ENCODE measurements at regions of chrX and their contacts with region 1.

Region 1: GRCh38 chrX:11461201-11462001 is 168.2 kb downstream of the AMELX start:
- DNase-seq: peak; percentile 63 to 79
- H3K4me3 ChIP-seq: no peak overlapping the region
- H3K4me3 Mint-ChIP-seq: peak overlapping the region; percentile 41
- H3K27ac Mint-ChIP-seq: peak overlapping the region; percentile 83
- H3K4me1 ChIP-seq: peaks cover 44% of the 10 kb centered on the region
- H3K4me1 Mint-ChIP-seq: peaks cover 17% of the 10 kb centered on the region
- H3K27me3 ChIP-seq: no peaks in the 10 kb centered on the region
- H3K27me3 Mint-ChIP-seq: no peaks in the 10 kb centered on the region
- CTCF ChIP-seq: no peak

Region 2: DNA sequence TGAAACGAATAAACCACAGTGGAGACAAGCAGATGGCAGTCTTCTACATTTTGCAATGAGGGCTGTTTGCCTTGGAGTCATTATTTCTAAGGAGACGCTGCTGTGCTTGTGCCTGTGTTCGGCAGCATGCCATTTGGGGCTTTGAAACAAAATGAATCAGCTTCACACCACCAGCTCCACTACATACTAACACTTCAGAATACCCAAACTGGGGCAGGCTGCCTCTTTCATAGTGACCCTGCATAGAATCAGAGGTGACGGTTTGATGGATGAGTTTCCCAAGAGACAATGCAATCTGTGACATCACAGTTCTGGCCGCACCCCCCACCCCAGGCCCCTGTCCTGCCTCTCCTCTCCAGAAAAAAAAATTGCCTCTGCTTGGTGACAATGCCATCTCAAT is 783.9 kb before region 1 on chrX:
- CTCF ChIA-PET with region 1: no interaction called
- POLR2A ChIA-PET with region 1: no interaction called
- intact Hi-C with region 1: no loop called
- DNase-seq: no peak
- H3K4me3 ChIP-seq: no peak overlapping the region
- H3K4me3 Mint-ChIP-seq: no peak overlapping the region
- H3K27ac Mint-ChIP-seq: no peak overlapping the region
- H3K4me1 ChIP-seq: no peaks in the 10 kb centered on the region
- H3K4me1 Mint-ChIP-seq: no peaks in the 10 kb centered on the region
- H3K27me3 ChIP-seq: no peaks in the 10 kb centered on the region
- H3K27me3 Mint-ChIP-seq: no peaks in the 10 kb centered on the region
- CTCF ChIP-seq: no peak

Region 3: GRCh38 chrX:11304829-11305228 is 156.6 kb before region 1 on chrX:
- CTCF ChIA-PET with region 1: no interaction called
- POLR2A ChIA-PET with region 1: no interaction called
- intact Hi-C with region 1: no loop called
- DNase-seq: no peak
- H3K4me3 ChIP-seq: no peak overlapping the region
- H3K4me3 Mint-ChIP-seq: no peak overlapping the region
- H3K27ac Mint-ChIP-seq: no peak overlapping the region
- H3K4me1 ChIP-seq: no peaks in the 10 kb centered on the region
- H3K4me1 Mint-ChIP-seq: no peaks in the 10 kb centered on the region
- H3K27me3 ChIP-seq: no peaks in the 10 kb centered on the region
- H3K27me3 Mint-ChIP-seq: no peaks in the 10 kb centered on the region
- CTCF ChIP-seq: no peak

Region 4: GRCh38 chrX:11509786-11510185 is 48.4 kb after region 1 on chrX:
- CTCF ChIA-PET with region 1: interaction called, 3 read pairs
- POLR2A ChIA-PET with region 1: no interaction called
- intact Hi-C with region 1: loop called (anchors 1 kb)
- DNase-seq: peak; percentile 68 to 71
- H3K4me3 ChIP-seq: no peak overlapping the region
- H3K4me3 Mint-ChIP-seq: no peak overlapping the region
- H3K27ac Mint-ChIP-seq: peak overlapping the region; percentile 65
- H3K4me1 ChIP-seq: peaks cover 23% of the 10 kb centered on the region
- H3K4me1 Mint-ChIP-seq: peaks cover 8% of the 10 kb centered on the region
- H3K27me3 ChIP-seq: no peaks in the 10 kb centered on the region
- H3K27me3 Mint-ChIP-seq: no peaks in the 10 kb centered on the region
- CTCF ChIP-seq: no peak